Posterior cingulate gyrus (tissue), 11 donors: ENCODE measurements at regions of chr1 and their contacts with region 1.

Region 1: DNA sequence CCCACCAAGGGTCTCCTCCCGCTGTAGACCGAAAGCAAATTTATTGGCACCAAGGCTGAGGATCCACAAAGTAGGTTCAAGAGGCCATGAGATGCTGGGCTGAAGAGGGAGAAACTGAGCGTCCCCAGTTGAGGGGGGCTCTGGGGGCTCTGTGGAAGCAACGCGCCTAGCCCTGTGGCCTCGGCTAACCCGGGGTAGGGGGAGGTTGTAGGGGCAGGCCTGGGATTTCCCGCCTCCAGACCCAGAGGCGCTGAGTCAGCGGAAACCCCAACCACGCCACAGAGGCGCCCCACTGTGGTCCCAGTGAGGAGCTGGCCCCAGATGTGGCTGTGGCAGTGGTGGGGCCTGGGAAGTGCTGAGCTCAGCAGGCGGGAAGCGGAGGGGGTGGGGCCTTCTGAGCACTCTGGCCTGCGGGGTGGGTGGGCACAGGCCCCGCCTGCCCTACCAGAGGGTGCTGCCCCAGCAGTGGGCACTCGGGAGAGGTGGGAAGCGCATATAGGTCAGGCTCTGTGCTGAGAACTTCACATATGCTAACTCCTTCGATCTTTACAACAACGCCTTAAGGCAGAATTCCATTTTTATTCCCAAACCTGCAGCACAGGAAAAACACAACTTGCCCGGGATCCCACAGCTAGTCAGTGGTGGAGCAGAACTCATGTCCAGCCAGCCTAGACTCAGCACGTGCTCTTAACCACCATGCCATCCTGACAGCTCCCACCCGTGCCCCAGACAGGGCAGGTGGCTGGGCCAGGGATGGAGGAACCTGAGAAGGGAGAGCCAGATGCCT is 1.5 kb upstream of the COL16A1 start:
- DNase-seq: peak in 7 of 10 donors; percentile 28 to 94 (median 68)

Region 2: DNA sequence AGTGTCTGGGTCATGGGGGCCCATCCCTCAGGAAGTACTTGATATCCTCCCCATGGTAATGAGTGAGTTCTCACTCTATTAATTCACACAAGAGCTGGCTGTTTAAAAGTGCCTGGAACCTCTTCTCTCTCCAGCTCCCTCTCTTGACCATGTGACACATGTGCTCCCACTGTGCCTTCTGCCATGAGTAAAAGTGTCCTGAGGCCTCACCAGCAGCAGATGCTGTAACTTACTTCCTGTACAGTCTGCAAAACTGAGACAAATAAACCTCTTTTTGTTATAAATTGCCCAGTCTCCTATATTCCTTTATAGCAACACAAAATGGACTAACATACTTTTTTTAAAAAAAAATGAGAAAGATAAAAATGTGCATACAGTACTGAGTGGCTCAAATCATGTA is 663.7 kb before region 1 on chr1:
- intact Hi-C with region 1: no loop called
- DNase-seq: no peak

Region 3: DNA sequence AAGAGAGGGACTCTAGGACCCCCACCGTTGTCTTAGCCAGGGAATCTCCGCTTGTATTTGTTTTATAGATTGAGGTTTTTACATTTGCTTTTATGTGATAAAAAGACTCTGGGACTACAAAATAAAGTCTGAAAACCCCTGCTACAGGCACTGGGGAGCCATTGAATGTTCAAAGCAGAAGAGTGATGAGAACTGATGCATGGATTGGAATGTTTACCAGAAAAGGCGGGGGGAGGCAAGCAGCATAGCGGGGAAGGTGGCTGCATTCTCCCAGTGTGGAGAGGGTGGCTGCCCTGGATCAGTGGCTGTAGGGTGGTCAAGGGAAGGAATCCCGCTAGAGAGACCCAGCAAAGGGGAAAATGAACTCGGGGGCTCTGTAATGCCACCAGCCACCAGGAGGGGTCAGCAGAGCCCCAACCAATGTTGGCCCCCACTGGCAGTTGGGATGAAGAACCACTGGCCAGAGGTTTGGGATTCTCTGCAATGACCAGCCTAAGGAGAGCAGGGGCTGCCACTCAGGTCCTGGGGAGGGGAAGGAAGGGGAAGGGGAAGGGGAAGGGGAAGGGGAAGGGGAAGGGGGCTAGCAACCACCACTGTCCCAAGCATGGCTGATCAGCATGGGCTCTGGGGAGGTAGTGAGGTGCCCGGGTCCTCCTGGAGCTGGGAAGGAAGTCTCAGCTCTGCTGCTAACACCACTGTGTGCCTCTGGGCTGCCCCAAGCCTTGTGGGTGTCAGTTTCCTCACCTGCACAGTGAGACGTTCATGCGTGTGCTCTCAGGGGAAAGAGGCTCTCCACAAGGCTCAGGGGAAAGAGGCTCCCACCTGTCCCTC is 41.4 kb before region 1 on chr1:
- intact Hi-C with region 1: loop called (anchors 1 kb)
- DNase-seq: peak in 9 of 10 donors; percentile 43 to 95 (median 76)